Caco-2 (cell line): ENCODE measurements at regions of chr14 and their contacts with region 1.

Region 1: DNA sequence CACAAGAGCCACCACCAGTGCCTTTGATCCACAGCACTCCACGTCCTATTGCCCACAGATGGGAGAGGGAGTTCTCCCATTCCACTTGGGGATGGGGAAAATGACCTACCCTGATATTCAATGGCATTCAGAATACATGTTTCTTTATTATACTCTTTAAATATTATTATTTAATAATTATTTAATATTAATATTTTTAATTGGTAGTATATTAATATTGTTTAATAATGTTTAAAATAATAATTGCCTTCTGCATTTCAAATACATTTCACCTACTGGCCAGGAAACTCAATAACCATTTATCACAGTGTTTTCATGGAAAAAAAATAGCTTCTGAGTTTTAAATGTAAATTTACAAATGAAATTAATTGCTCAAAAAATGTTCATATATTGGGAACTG is 127.4 kb upstream of the G2E3 start:
- DNase-seq: no peak
- H3K4me3 ChIP-seq: no peak overlapping the region
- H3K4me3 Mint-ChIP-seq: no peak overlapping the region
- H3K27ac Mint-ChIP-seq: no peak overlapping the region
- H3K4me1 ChIP-seq: no peaks in the 10 kb centered on the region
- H3K4me1 Mint-ChIP-seq: peaks cover 10% of the 10 kb centered on the region
- H3K27me3 ChIP-seq: no peaks in the 10 kb centered on the region
- H3K27me3 Mint-ChIP-seq: no peaks in the 10 kb centered on the region
- CTCF ChIP-seq: no peak

Region 2: GRCh38 chr14:30291216-30291615 is 140.3 kb before region 1 on chr14:
- CTCF ChIA-PET with region 1: no interaction called
- POLR2A ChIA-PET with region 1: no interaction called
- intact Hi-C with region 1: loop called (anchors 5 kb)
- DNase-seq: no peak
- H3K4me3 ChIP-seq: no peak overlapping the region
- H3K4me3 Mint-ChIP-seq: no peak overlapping the region
- H3K27ac Mint-ChIP-seq: no peak overlapping the region
- H3K4me1 ChIP-seq: no peaks in the 10 kb centered on the region
- H3K4me1 Mint-ChIP-seq: no peaks in the 10 kb centered on the region
- H3K27me3 ChIP-seq: no peaks in the 10 kb centered on the region
- H3K27me3 Mint-ChIP-seq: no peaks in the 10 kb centered on the region
- CTCF ChIP-seq: no peak